HCT116 (cell line): ENCODE measurements at regions of chr6 and their contacts with region 1.

Region 1: GRCh38 chr6:159693128-159693893 is at the start of gene SOD2:
- DNase-seq: peak; percentile 61
- ATAC-seq: peak; percentile 86
- H3K4me3 ChIP-seq: peak within 1 kb of the TSS; percentile 75 to 86
- H3K27ac ChIP-seq: peak within 1 kb of the TSS; percentile 79
- H3K4me1 ChIP-seq: peaks cover 15 to 26% of the 10 kb centered on the region in 2 experiments
- H3K27me3 ChIP-seq: no peaks in the 10 kb centered on the region
- CTCF ChIP-seq: no peak
- POLR2A ChIP-seq: peak; percentile 90
- RAD21 ChIP-seq: no peak
- total RNA-seq, gene SOD2: 98.6 TPM

Region 2: DNA sequence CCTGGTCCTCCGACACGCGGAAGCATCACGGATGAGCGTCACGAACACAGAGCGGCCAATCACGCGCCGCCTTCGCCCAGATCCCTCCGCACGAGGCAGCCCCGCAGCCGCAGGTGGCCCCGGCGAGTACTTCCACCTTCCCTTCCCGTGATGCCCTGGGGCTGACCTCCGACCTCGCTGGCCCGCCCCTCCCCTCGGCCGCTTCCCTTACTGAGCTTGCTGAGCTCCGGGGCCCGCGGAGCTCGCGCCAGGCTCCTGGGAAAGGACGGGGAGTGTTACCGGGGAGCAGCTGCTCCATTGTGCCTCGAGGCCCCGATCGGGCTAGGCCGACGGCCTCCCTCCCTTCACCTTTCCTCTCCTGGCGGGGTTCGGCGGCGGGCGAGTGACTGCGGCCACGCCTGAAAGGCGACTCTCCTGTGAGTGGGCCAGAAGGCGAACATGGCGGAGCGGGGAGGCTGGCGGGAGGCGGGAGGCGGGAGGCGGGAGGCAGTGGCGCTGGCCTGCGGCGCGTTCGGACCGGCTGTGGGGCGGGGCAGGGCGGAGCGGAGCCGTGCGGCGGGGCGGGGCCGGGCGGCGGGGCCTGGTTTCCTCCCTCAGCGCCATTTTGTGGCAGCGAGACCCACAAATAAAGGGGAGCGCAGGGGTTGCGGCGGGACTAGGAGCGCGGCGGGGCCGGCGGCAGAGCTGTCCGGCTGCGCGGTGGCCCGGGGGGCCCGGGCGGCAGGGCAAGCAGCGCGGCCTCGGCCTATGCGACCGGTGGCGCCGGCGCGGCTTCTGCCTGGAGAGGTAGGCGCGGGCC is 33.8 kb after region 1 on chr6 and contains the start of gene WTAP:
- CTCF ChIA-PET with region 1: no interaction called
- POLR2A ChIA-PET with region 1: interaction called, 12 read pairs
- RAD21 ChIA-PET with region 1: no interaction called
- intact Hi-C with region 1: no loop called
- DNase-seq: peak; percentile 94
- ATAC-seq: peak; percentile 87
- H3K4me3 ChIP-seq: peak within 1 kb of the TSS; percentile 81 to 89
- H3K27ac ChIP-seq: peak within 1 kb of the TSS; percentile 98
- H3K4me1 ChIP-seq: peaks cover 8 to 31% of the 10 kb centered on the region in 2 experiments; a peak in 3 of 4 replicates
- H3K27me3 ChIP-seq: no peaks in the 10 kb centered on the region
- CTCF ChIP-seq: no peak
- POLR2A ChIP-seq: peak; percentile 87
- RAD21 ChIP-seq: no peak
- total RNA-seq, gene WTAP: 88.6 TPM

Region 3: GRCh38 chr6:159739341-159739740 is 46.0 kb after region 1 on chr6:
- CTCF ChIA-PET with region 1: no interaction called
- POLR2A ChIA-PET with region 1: no interaction called
- RAD21 ChIA-PET with region 1: no interaction called
- intact Hi-C with region 1: no loop called
- DNase-seq: no peak
- ATAC-seq: no peak
- H3K4me3 ChIP-seq: no peak overlapping the region
- H3K27ac ChIP-seq: no peak overlapping the region
- H3K4me1 ChIP-seq: no peaks in the 10 kb centered on the region
- H3K27me3 ChIP-seq: no peaks in the 10 kb centered on the region
- CTCF ChIP-seq: no peak
- POLR2A ChIP-seq: no peak
- RAD21 ChIP-seq: no peak

Region 4: DNA sequence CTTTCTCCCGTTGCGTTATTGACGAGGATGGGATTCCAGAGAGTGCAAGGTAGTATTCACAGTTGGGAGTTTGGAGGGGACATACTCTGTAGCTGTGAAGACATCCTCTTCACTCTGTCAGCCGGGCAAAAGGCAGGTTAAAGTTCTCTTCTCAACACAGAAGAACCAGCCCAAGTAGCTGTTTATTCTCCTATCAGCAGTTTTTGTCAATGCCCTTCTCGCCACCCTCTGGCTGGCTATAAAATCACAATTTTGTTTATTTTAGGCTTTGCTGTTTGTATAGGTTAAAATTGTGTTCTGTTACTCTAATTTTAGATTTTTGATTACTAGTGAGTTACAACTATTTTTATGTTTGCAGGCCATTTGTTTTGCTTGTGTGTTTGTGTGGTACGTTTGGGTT is 159.6 kb after region 1 on chr6:
- CTCF ChIA-PET with region 1: interaction called, 3 read pairs
- POLR2A ChIA-PET with region 1: no interaction called
- RAD21 ChIA-PET with region 1: no interaction called
- intact Hi-C with region 1: loop called (anchors 1 kb)
- DNase-seq: no peak
- ATAC-seq: peak; percentile 58; the same call in 1 of the 2 replicates
- H3K4me3 ChIP-seq: no peak overlapping the region
- H3K27ac ChIP-seq: no peak overlapping the region
- H3K4me1 ChIP-seq: no peaks in the 10 kb centered on the region
- H3K27me3 ChIP-seq: no peaks in the 10 kb centered on the region
- CTCF ChIP-seq: peak in 2 of 3 experiments; percentile 14 to 49; a peak in 2 of 6 replicates
- POLR2A ChIP-seq: no peak
- RAD21 ChIP-seq: peak; percentile 61

Region 5: DNA sequence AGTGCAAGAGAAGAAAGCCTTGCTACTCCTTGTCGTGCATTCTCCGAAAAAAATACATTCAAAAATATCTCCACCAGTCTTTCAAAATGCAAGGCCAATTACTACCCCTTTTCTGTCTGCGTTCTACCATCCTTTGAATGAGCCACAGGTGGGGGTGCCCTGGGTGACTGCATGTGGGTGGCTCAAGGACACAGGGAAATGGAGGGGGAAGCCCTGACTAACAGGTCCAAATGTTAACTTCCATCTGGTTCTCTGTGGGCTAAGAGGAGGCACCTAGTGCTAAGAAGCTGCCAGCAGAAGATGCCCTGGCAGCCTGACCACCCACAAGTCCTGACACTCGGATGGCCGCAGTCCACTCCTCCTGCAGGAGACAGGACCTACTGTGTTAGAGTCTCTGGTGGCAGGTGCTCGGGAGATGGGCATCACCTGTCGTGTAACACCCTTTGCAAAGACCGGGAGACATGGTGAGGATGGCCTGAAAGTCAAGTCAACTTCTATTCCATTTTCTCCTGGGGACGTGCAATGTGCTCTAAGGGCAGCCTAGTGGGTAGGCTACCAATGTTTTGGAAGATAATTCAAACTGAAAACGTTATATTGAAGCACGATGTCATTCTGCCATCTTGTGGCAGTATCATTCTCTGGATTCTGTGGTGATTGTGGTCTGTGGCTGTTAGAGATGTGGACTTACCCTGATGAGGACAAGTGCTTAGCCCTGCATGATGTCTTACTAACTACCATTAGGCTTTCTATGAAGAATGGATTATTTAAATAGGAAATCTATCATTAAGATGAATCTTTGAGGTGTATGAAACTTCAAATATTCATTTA is 248.2 kb after region 1 on chr6:
- CTCF ChIA-PET with region 1: no interaction called
- POLR2A ChIA-PET with region 1: no interaction called
- RAD21 ChIA-PET with region 1: no interaction called
- intact Hi-C with region 1: loop called (anchors 1 kb)
- DNase-seq: peak; percentile 12
- ATAC-seq: peak; percentile 73
- H3K4me3 ChIP-seq: no peak overlapping the region
- H3K27ac ChIP-seq: no peak overlapping the region
- H3K4me1 ChIP-seq: no peaks in the 10 kb centered on the region
- H3K27me3 ChIP-seq: no peaks in the 10 kb centered on the region
- CTCF ChIP-seq: peak; percentile 31 to 43 (median 39); a peak in 3 of 6 replicates
- POLR2A ChIP-seq: no peak
- RAD21 ChIP-seq: peak; percentile 68

Region 6: DNA sequence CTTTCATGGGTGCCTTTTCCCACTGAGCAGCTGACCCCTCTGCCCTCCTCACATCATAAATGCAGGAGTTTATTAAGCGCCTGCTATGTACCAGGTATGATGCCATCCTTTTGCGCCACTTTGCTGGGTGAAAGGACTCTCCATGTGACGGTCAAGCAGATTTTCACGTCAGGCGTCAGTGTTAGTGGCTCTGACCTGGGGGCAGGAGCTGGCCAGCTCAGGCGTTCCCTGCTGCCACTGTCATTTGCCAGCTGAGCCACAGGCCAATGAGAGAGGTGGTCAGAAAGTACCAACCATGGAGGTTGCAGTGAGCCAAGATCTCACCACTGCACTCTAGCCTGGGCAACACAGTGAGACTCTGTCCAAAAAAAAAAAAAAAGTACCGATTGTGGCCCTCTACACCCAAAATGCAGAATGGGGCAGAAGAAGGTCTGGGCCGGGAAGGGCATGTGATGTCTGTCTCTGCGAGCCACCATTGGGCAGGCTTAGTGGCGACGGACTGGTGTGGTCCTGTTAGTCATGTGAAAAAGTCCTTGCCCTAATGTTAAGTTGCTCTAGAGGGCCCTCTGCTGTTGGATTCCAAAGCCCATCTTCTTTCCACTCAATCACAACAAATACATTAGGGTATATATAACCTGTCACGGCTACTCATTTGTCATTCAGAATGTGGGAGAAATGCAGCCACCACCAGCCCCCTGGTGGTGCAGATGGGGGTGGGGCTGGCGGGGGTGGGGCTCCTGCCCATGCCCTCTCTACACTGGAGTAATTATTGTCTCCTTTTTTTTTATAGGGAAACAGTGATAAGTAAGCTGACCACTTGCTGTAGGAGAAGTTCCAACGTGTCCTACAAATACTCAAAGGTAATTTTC is 409.9 kb after region 1 on chr6:
- CTCF ChIA-PET with region 1: no interaction called
- POLR2A ChIA-PET with region 1: no interaction called
- RAD21 ChIA-PET with region 1: no interaction called
- intact Hi-C with region 1: loop called (anchors 1 kb)
- DNase-seq: peak; percentile 46
- ATAC-seq: peak; percentile 86
- H3K4me3 ChIP-seq: no peak overlapping the region
- H3K27ac ChIP-seq: no peak overlapping the region
- H3K4me1 ChIP-seq: no peaks in the 10 kb centered on the region
- H3K27me3 ChIP-seq: no peaks in the 10 kb centered on the region
- CTCF ChIP-seq: peak; percentile 33 to 62 (median 60); a peak in 5 of 6 replicates
- POLR2A ChIP-seq: no peak
- RAD21 ChIP-seq: peak; percentile 49

Region 7: GRCh38 chr6:160398674-160399271 is 705.5 kb after region 1 on chr6:
- CTCF ChIA-PET with region 1: no interaction called
- POLR2A ChIA-PET with region 1: no interaction called
- RAD21 ChIA-PET with region 1: no interaction called
- intact Hi-C with region 1: loop called (anchors 10 kb)
- DNase-seq: no peak
- ATAC-seq: no peak
- H3K4me3 ChIP-seq: no peak overlapping the region
- H3K27ac ChIP-seq: no peak overlapping the region
- H3K4me1 ChIP-seq: peaks cover 5% of the 10 kb centered on the region in 2 experiments; a peak in 2 of 4 replicates
- H3K27me3 ChIP-seq: no peaks in the 10 kb centered on the region
- CTCF ChIP-seq: no peak
- POLR2A ChIP-seq: no peak
- RAD21 ChIP-seq: no peak